ENCODE measurements at regions of chr9 and their contacts with region 1.

Region 1: GRCh38 chr9:126704873-126705766 is 91.4 kb downstream of the LMX1B start:
- DNase-seq: peak; percentile 94
- ATAC-seq: peak; percentile 43
- H3K4me3 Mint-ChIP-seq: peak overlapping the region; percentile 49
- H3K27ac Mint-ChIP-seq: no peak overlapping the region
- H3K4me1 Mint-ChIP-seq: peaks cover 17% of the 10 kb centered on the region
- H3K27me3 Mint-ChIP-seq: peaks cover 62% of the 10 kb centered on the region
- CTCF ChIP-seq: peak; percentile 78

Region 2: DNA sequence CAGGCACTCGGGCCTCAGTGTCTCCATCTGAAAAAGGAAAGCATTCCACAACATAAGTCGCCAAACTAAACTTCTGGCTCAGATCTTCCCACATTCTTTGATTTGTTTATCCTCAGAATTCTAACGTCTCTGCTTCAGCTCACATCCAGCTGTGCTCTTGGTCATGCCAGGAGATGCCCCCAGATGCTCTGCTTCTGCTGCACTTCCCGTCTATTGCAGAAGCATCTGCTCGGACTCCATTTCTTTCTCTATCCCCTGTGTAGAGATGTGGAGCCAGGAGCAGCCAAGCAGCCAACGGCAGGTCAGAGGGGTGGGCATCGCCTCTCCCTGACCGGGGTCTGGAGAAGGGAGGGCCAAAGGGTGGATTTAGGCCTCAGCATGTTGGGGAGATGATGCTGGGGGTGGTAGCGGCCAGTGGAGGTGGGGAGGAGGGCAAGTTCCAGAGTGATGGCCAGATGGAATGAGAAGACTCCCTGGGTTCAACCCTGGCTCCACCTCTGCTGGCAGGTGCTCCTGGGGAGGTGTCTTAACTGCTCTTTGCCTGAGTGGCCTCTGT is 244.8 kb before region 1 on chr9:
- CTCF ChIA-PET with region 1: no interaction called
- POLR2A ChIA-PET with region 1: no interaction called
- DNase-seq: no peak
- ATAC-seq: no peak
- H3K4me3 Mint-ChIP-seq: no peak overlapping the region
- H3K27ac Mint-ChIP-seq: no peak overlapping the region; the same call in 1 of the 2 replicates
- H3K4me1 Mint-ChIP-seq: no peaks in the 10 kb centered on the region
- H3K27me3 Mint-ChIP-seq: no peaks in the 10 kb centered on the region
- CTCF ChIP-seq: no peak

Region 3: DNA sequence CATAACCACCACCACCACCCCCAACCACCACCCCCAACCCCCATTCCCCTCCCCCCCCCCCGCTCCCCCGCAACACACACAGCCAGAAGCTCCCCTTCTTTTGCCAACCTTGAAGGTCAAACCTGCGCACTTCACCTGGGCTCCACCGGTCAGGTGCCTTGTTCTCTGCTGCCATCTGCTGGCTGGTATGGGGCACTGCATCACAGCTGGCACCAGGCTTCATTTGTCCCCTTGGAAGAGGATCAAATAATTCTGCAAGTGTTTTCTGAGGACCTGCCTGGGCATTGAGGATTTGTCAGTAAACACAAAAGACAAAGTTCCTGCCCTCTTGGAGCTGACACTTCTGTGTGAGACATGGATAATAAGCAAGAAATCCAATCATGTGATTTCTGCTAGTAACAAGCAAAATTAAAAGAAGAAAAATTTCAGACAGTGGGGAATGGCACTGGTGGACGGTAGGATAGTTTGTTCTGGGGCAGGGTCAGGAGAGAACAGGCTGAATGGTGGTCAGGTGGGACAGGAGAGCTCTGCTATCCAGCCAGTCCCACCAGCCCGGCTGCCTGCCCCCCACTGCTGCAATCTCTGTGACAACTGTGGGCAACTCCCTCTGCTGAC is 147.0 kb before region 1 on chr9:
- CTCF ChIA-PET with region 1: interaction called, 18 read pairs
- POLR2A ChIA-PET with region 1: no interaction called
- DNase-seq: peak; percentile 85
- ATAC-seq: peak; percentile 86
- H3K4me3 Mint-ChIP-seq: no peak overlapping the region
- H3K27ac Mint-ChIP-seq: no peak overlapping the region
- H3K4me1 Mint-ChIP-seq: peaks cover 7% of the 10 kb centered on the region
- H3K27me3 Mint-ChIP-seq: peaks cover 3% of the 10 kb centered on the region; the same call in 1 of the 2 replicates
- CTCF ChIP-seq: peak; percentile 98

Region 4: DNA sequence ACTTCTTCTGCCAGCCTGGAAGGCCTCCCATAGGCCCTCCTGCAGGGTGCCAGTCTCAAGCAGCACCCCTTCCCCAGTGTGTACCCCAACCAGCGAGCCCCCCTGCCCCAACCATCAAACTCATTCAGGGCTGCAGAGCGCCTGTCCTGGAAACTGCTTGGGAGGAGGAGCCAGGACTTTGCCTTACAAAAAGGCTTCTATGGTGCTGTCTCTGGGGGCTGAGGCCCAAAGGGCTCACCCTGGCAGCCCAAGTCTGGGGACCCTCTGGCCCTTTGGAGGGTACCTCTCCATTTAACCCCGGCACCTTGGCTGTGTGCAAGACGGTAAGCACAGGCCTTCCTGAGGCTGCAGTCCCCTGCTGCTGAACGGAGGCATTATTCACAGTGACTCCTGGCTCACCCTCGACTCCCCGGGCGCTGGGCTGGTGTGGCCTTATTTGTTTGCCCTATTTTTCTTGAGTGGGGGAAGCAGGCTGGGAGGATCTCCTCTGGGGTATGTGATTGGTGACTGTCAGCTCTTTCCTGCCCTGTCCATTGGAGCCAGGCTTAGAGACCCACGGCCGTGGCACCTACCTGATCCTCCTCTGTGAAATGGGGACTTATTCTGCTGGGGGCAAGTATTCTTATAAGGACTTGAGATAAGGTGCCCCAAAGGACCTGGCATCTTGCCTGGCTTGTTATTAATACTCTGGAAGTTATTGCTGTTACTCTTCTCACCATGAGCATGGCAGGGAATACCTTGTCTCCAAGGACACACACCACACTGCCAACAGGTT is 85.6 kb before region 1 on chr9:
- CTCF ChIA-PET with region 1: interaction called, 19 read pairs
- POLR2A ChIA-PET with region 1: no interaction called
- DNase-seq: no peak
- ATAC-seq: peak; percentile 3
- H3K4me3 Mint-ChIP-seq: peak overlapping the region; percentile 52
- H3K27ac Mint-ChIP-seq: no peak overlapping the region
- H3K4me1 Mint-ChIP-seq: peaks cover 80% of the 10 kb centered on the region
- H3K27me3 Mint-ChIP-seq: peaks cover 100% of the 10 kb centered on the region
- CTCF ChIP-seq: no peak

Region 5: DNA sequence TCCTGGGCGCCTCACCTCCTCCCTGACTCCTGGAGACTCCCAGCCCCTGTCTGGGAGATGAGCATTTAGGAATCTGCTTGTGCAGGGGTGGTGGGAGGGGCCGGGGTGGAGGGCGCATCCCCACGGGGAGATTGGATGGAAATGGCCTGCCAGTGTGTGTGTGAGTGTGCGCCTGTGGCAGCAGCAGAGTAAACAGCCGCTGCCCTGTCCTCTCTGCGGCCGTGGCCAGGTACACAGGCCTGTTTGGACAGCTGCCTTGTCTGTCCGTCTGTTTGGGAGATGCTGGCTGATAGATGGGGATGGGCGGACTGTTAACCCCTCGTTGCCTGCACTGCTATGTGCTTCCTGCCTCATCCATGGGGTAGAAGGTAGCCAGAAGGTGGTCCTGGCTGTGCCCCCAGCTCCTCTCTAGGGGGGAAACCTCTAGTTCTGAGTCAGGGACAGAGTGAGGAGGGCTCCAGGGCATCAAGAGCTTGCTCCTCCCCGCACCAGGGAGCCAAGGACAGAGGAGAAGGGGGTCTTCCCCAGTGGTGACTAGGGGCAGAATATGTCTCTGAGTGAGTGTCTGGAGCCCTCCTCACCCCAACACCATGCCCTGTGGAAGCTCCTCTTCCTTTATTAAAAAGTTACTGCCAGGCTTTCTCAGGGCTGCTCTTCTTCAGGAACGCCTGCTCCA is 31.3 kb before region 1 on chr9:
- CTCF ChIA-PET with region 1: interaction called, 112 read pairs
- POLR2A ChIA-PET with region 1: no interaction called
- DNase-seq: peak; percentile 50
- ATAC-seq: no peak
- H3K4me3 Mint-ChIP-seq: peak overlapping the region; percentile 24; the same call in 1 of the 2 replicates
- H3K27ac Mint-ChIP-seq: no peak overlapping the region
- H3K4me1 Mint-ChIP-seq: peaks cover 49% of the 10 kb centered on the region
- H3K27me3 Mint-ChIP-seq: peaks cover 70% of the 10 kb centered on the region
- CTCF ChIP-seq: no peak

Region 6: GRCh38 chr9:126733005-126733404 is 27.9 kb after region 1 on chr9:
- CTCF ChIA-PET with region 1: interaction called, 19 read pairs
- POLR2A ChIA-PET with region 1: no interaction called
- DNase-seq: no peak
- ATAC-seq: no peak
- H3K4me3 Mint-ChIP-seq: no peak overlapping the region
- H3K27ac Mint-ChIP-seq: no peak overlapping the region
- H3K4me1 Mint-ChIP-seq: no peaks in the 10 kb centered on the region
- H3K27me3 Mint-ChIP-seq: peaks cover 26% of the 10 kb centered on the region
- CTCF ChIP-seq: no peak

Region 7: GRCh38 chr9:126781186-126782052 is 76.3 kb after region 1 on chr9:
- CTCF ChIA-PET with region 1: interaction called, 734 read pairs
- POLR2A ChIA-PET with region 1: interaction called, 15 read pairs
- DNase-seq: peak; percentile 97
- ATAC-seq: peak; percentile 79
- H3K4me3 Mint-ChIP-seq: peak overlapping the region; percentile 27
- H3K27ac Mint-ChIP-seq: no peak overlapping the region
- H3K4me1 Mint-ChIP-seq: 0 out of 2 replicates have a peak, but pooled peaks cover 4% of the 10 kb centered on the region
- H3K27me3 Mint-ChIP-seq: peaks cover 9% of the 10 kb centered on the region; the same call in 1 of the 2 replicates
- CTCF ChIP-seq: peak; percentile 98